ENCODE measurements at regions of chr6 and their contacts with region 1.

Region 1: GRCh38 chr6:128882991-128883611 is at the start of gene LAMA2:
- DNase-seq: peak; percentile 94
- total RNA-seq, gene LAMA2: 344 TPM

Region 2: DNA sequence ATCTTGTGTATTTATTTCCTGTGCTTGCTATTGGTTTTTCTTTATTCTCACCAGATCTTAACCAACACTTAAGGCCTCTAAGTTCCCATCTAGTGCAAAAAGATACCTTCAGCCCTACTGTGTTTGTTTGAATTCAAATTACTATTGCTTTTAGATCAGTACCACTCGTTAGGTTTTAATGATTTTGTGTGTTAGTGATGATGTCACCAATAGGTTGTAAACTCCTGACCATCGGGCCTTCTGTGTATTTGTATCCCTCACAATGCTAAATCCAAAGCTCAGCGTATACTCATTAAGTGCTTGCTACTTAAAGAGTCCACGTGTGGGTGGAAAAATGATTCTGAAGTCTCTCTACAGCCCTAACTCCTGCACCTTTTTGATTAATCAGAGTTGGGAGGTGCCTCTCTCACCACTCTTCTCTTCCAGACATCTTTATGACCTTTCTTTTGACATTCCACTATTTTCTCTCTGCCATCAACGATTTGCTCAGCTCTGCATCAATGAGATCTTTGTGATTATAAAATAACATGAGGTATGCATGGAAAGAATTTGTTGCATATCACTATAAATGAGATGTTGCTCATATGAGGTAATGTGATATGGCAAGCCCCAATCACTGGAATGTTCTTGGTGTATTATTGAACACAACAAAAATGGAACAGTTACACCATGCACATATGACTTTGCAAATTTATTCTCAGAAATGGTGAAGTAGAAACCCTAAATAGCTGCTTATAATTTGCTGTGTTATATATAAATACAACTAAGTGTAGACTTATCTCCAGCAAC is 55.2 kb before region 1 on chr6:
- intact Hi-C with region 1: loop called (anchors 5 kb)
- DNase-seq: no peak

Region 3: DNA sequence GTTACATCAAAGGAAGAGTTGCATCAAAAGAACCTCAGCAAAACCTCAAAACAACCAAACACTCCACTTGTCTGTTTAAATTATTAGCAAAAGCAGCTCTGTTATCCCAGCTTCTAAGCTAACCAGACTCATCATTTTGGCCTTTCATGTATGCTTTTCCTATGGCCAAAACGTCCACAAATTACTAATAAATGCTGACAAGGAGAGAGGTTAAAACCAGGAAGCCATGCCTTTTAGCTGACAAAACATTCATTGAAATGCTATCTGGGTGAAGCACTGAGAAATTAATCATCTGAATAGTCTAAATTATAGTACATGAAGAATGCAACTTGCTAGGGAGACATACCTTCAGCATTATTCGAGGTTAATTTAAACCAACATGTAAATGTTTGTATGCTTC is 80.5 kb after region 1 on chr6:
- intact Hi-C with region 1: no loop called
- DNase-seq: no peak

Region 4: DNA sequence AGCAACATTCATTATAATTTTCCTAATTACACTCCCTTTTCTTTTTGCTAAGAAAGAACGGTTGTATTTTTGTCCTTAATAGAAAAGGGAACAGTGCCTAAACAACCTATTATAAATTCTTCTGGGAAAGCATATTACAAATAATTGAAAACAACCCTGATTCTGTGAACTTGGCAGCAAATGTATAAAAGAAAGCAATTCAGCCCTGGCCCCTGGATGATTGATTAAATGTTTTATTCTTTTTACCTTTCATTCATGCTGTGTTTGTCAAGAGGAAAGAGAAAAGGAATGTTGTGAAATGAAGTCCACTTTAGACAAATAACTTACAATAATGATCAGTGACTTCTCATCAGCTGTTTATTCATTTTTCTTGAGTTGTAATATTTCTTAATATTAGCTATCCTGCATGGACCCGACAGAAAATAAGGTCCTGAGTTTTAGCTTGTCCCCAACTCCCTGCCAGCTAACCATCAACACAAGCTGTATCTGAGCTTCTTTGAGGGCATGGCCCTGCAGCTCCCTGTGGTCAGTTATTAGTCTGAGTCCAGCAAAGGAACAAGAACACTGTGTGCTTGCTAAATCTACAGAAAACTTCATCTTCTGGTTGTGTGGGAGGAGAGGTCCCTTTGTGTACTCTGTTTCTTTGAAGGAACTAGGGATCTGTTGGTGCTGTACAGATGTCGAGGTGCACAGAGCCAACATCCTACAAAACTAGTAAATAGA is 248.0 kb after region 1 on chr6:
- intact Hi-C with region 1: loop called (anchors 10 kb)
- DNase-seq: no peak

Measured in cardiac septum (tissue), 1 donor.